ENCODE measurements at regions of chr16 and their contacts with region 1.

Region 1: DNA sequence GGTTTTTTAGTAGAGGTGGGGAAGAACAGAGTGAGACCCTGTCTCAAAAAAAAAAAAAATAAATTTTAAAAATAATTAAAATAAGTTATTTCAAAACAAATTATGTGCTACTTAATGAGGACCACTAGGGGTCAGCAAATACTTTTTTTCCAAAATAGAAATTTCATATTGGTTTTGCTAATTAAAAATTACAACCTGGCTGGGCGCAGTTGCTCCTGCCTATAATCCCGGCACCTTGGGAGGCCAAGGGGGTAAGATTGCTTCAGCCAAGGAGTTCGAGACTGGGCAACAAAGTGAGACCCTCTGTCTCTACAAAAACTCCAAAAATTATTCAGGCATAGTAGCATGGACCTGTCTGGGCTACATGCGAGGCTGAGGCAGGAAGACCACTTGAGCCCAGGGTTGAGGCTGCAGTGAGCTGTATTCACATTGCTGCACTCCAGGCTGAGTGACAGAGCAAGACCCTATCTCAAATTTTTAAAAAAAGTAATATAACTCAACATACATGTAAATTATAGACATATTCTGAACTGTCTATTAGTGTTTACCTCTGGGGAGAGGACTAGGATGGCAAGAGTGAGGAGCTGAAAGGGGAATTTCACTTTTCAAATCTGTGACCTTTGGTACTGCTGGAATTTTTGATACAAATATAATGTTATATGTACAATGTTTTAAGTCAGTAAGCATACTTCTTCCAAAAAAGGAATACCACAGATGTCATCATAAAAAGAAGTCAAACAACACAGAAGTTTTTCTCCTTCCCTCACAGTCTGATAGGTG is 8.1 kb downstream of the MEIOB start:
- DNase-seq: no peak
- H3K4me3 Mint-ChIP-seq: no peak overlapping the region
- H3K27ac Mint-ChIP-seq: no peak overlapping the region
- H3K4me1 Mint-ChIP-seq: no peaks in the 10 kb centered on the region
- H3K27me3 Mint-ChIP-seq: peaks cover 36% of the 10 kb centered on the region
- CTCF ChIP-seq: no peak

Region 2: DNA sequence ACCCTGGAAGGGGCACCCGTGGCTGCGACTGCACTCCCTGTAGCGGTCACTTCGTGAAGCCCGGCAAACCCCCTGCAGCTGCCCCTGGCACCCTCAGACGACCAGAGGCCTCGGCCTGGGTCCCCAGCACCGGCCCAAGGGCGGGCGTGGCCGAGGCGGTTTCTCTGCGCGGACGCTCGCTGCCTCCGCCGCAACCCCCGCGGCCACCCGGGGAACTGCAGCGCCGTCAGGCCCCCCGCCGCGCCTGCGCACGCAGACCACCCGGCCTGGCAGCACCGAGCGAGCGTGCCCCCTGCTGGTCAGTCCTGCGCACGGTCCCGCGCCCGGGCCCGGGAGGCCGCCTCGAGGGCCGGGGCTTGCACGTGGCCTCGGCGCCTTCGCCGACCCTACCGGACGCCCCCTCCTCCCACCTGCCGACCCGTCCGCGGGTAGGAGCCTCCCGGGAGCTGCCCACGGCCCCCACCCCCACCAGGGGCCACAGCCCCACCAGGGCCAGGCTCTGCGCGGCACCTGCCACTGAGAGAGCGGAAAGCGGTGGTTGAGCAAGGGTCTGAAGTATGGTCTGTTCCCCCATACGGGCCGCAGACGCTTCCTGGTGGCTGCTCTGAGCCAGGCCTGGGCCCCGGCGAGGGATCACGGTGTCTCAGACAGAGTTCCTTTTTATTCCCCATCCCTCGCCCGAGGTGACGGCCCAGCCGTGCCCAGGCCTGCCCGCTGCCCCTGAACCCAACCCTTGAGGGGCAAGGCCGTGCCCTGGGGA is 65.9 kb after region 1 on chr16:
- CTCF ChIA-PET with region 1: interaction called, 4 read pairs
- intact Hi-C with region 1: loop called (anchors 1 kb)
- DNase-seq: peak; percentile 99
- H3K4me3 Mint-ChIP-seq: peak overlapping the region; percentile 28
- H3K27ac Mint-ChIP-seq: no peak overlapping the region
- H3K4me1 Mint-ChIP-seq: no peaks in the 10 kb centered on the region
- H3K27me3 Mint-ChIP-seq: peaks cover 6% of the 10 kb centered on the region
- CTCF ChIP-seq: peak; percentile 99

Measured in Calu3 (cell line).